ENCODE measurements at regions of chr13 and their contacts with region 1.

Region 1: DNA sequence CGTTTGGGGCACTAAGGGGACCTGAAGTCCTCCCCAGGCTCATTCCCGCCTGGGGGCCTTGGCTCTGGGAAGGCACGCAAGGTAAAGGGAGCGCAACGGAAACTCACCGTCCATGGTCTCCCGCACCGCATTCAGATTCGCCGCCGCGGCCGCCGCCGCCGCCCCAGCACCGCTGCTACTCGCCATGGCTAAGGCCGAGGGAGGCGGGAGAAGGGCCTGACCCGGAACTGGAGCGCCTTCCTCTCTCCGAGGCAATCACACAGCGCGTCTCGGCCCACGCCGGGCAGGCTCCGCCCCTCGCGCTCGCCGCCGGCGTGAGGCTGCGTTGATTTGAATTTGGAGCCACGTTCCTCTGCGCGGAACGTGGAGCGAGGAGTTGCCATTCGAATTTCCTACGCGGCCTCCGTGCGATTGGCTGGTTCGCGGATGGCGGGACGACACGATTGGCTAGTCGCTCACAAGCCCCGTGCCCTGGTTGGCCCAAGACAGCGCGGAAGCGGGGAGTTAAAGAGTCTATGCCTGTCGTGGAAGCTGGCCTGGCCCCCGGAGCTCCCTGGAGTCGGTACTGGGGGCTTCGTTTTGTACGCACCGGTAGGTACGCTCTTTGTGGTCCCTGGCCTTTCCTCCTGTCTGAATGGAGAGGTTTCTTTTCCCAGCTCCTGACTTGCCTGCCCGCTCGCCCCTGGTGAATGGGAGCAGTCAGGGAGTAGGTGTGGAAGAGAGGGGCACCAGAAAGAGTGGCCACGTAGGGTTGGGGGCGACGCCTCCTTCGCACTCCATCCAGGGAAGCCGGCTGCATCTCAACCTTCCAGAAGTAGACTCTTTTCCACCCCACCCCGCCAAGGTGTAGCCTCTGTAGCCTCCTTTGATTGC is at the starts of genes BORA and MZT1:
- DNase-seq: peak; percentile 87 to 95 (median 94)
- ATAC-seq: peak; percentile 95
- H3K4me3 ChIP-seq: peak within 1 kb of the TSS; percentile 93
- H3K4me3 Mint-ChIP-seq: peak within 1 kb of the TSS; percentile 85 to 99 (median 95)
- H3K27ac ChIP-seq: peak within 1 kb of the TSS; percentile 73
- H3K27ac Mint-ChIP-seq: peak within 1 kb of the TSS; percentile 85 to 95 (median 91)
- H3K4me1 ChIP-seq: peaks cover 23 to 30% of the 10 kb centered on the region in 2 donors
- H3K4me1 Mint-ChIP-seq: peaks cover 30 to 69% (median 54%) of the 10 kb centered on the region in 7 donors
- H3K27me3 ChIP-seq: no peaks in the 10 kb centered on the region
- H3K27me3 Mint-ChIP-seq: no peaks in the 10 kb centered on the region
- total RNA-seq, gene BORA: 4.7 to 18.0 (median 6.2) TPM
- total RNA-seq, gene MZT1: 4.5 to 14.9 (median 6.3) TPM

Region 2: GRCh38 chr13:72745260-72745659 is 17.6 kb after region 1 on chr13:
- CTCF ChIA-PET with region 1: no interaction called
- POLR2A ChIA-PET with region 1: interaction called, 4 read pairs
- intact Hi-C with region 1: loop called in 1 of 2 experiments (anchors 2 kb)
- DNase-seq: no peak
- ATAC-seq: no peak
- H3K4me3 ChIP-seq: no peak overlapping the region
- H3K4me3 Mint-ChIP-seq: no peak overlapping the region
- H3K27ac ChIP-seq: no peak overlapping the region
- H3K27ac Mint-ChIP-seq: peak overlapping the region in 7 of 9 donors; percentile 28 to 65 (median 37)
- H3K4me1 ChIP-seq: no peaks in the 10 kb centered on the region
- H3K4me1 Mint-ChIP-seq: peaks cover 4 to 28% (median 16%) of the 10 kb centered on the region in 7 donors
- H3K27me3 ChIP-seq: no peaks in the 10 kb centered on the region
- H3K27me3 Mint-ChIP-seq: no peaks in the 10 kb centered on the region

Region 3: GRCh38 chr13:72781451-72782439 is 54.1 kb after region 1 on chr13 and contains the starts of genes DIS3 and PIBF1:
- CTCF ChIA-PET with region 1: no interaction called
- POLR2A ChIA-PET with region 1: no interaction called
- intact Hi-C with region 1: loop called (anchors 1 kb)
- DNase-seq: peak; percentile 82 to 97 (median 94)
- ATAC-seq: peak; percentile 99
- H3K4me3 ChIP-seq: peak within 1 kb of the TSS; percentile 94
- H3K4me3 Mint-ChIP-seq: peak within 1 kb of the TSS; percentile 96 to 100 (median 99)
- H3K27ac ChIP-seq: peak within 1 kb of the TSS; percentile 87
- H3K27ac Mint-ChIP-seq: peak within 1 kb of the TSS; percentile 95 to 100 (median 98)
- H3K4me1 ChIP-seq: peaks cover 35 to 37% of the 10 kb centered on the region in 2 donors
- H3K4me1 Mint-ChIP-seq: peaks cover 44 to 84% (median 71%) of the 10 kb centered on the region in 7 donors
- H3K27me3 ChIP-seq: no peaks in the 10 kb centered on the region
- H3K27me3 Mint-ChIP-seq: no peaks in the 10 kb centered on the region
- total RNA-seq, gene DIS3: 24.8 to 44.8 (median 39.2) TPM
- total RNA-seq, gene PIBF1: 27.3 to 40.1 (median 31.6) TPM

Region 4: GRCh38 chr13:73521290-73521624 is 793.6 kb after region 1 on chr13:
- CTCF ChIA-PET with region 1: no interaction called
- POLR2A ChIA-PET with region 1: no interaction called
- intact Hi-C with region 1: loop called in 1 of 2 experiments (anchors 5 kb)
- DNase-seq: peak in 6 of 9 donors; percentile 35 to 57 (median 52)
- ATAC-seq: peak; percentile 79
- H3K4me3 ChIP-seq: peak overlapping the region; percentile 59
- H3K4me3 Mint-ChIP-seq: peak overlapping the region; percentile 82 to 93 (median 88)
- H3K27ac ChIP-seq: peak overlapping the region; percentile 71
- H3K27ac Mint-ChIP-seq: peak overlapping the region; percentile 89 to 99 (median 97)
- H3K4me1 ChIP-seq: peaks cover 0 to 13% of the 10 kb centered on the region in 2 donors
- H3K4me1 Mint-ChIP-seq: peaks cover 9 to 32% (median 25%) of the 10 kb centered on the region in 7 donors
- H3K27me3 ChIP-seq: no peaks in the 10 kb centered on the region
- H3K27me3 Mint-ChIP-seq: peaks cover 0 to 3% (median 0%) of the 10 kb centered on the region in 5 donors

Region 5: GRCh38 chr13:73715114-73715910 is 987.7 kb after region 1 on chr13:
- CTCF ChIA-PET with region 1: no interaction called
- POLR2A ChIA-PET with region 1: no interaction called
- intact Hi-C with region 1: loop called in 1 of 2 experiments (anchors 5 kb)
- DNase-seq: peak in 8 of 9 donors; percentile 53 to 85 (median 77)
- ATAC-seq: peak; percentile 90
- H3K4me3 ChIP-seq: peak overlapping the region; percentile 7
- H3K4me3 Mint-ChIP-seq: peak overlapping the region; percentile 72 to 86 (median 78)
- H3K27ac ChIP-seq: peak overlapping the region; percentile 67
- H3K27ac Mint-ChIP-seq: peak overlapping the region; percentile 87 to 99 (median 97)
- H3K4me1 ChIP-seq: peaks cover 34 to 43% of the 10 kb centered on the region in 2 donors
- H3K4me1 Mint-ChIP-seq: peaks cover 25 to 80% (median 58%) of the 10 kb centered on the region in 7 donors
- H3K27me3 ChIP-seq: no peaks in the 10 kb centered on the region
- H3K27me3 Mint-ChIP-seq: no peaks in the 10 kb centered on the region